Right cardiac atrium (tissue), 5 donors: ENCODE measurements at regions of chr10 and their contacts with region 1.

Region 1: GRCh38 chr10:76432274-76433012 is 1001.0 kb downstream of the LRMDA start:
- DNase-seq: peak in 2 of 3 donors; percentile 59
- ATAC-seq: peak; percentile 64 to 78
- H3K4me3 ChIP-seq: no peak overlapping the region
- H3K27ac ChIP-seq: peak overlapping the region; percentile 98
- H3K4me1 ChIP-seq: peaks cover 19% of the 10 kb centered on the region
- H3K27me3 ChIP-seq: no peaks in the 10 kb centered on the region

Region 2: DNA sequence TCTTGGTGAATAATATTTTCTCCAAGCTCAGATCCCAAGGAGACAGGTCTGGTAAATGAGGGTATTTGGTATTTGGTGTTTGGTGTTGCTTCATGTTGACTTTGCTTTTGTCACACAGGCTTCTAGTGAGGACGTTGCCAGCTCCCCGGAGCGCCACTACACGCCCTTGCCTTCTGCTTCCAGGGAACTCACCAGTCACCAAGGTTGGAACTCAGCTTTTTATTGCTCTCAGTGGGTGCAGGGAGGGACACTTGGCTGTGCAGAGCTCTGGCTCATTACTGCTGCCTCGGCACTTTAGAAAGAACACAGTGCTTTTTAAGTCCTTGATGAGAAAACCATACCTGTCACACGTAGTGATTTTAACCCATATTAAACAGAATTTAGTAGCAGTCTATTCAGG is 108.2 kb before region 1 on chr10:
- intact Hi-C with region 1: loop called in 1 of 4 experiments (anchors 10 kb)
- DNase-seq: peak; percentile 60 to 82 (median 76)
- ATAC-seq: peak; percentile 97
- H3K4me3 ChIP-seq: no peak overlapping the region
- H3K27ac ChIP-seq: peak overlapping the region; percentile 30
- H3K4me1 ChIP-seq: peaks cover 4% of the 10 kb centered on the region
- H3K27me3 ChIP-seq: no peaks in the 10 kb centered on the region

Region 3: DNA sequence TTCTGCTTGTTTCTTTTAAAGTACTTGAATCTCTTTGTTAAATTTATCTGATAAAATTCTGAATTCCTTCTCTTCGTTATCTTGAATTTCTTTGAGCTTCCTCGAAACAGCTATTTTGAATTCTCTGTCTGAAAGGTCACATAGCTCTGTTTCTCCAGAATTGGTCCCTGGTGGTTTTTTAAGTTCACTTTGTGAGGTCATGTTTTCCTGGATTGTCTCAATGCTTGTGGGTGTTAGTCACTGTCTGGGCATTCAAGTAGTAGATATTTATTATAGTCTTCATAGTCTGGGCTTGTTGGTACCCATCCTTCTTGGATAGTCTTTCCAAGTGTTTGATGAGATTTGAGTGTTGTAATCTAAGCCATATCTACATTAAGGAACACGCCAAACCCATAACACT is 59.6 kb after region 1 on chr10:
- intact Hi-C with region 1: no loop called
- DNase-seq: no peak
- ATAC-seq: peak in 1 of 2 donors; percentile 42
- H3K4me3 ChIP-seq: no peak overlapping the region
- H3K27ac ChIP-seq: no peak overlapping the region
- H3K4me1 ChIP-seq: no peaks in the 10 kb centered on the region
- H3K27me3 ChIP-seq: no peaks in the 10 kb centered on the region

Region 4: GRCh38 chr10:76547352-76547972 is 115.0 kb after region 1 on chr10:
- intact Hi-C with region 1: loop called in 1 of 4 experiments (anchors 10 kb)
- DNase-seq: peak; percentile 73 to 89 (median 82)
- ATAC-seq: peak; percentile 22 to 73
- H3K4me3 ChIP-seq: no peak overlapping the region
- H3K27ac ChIP-seq: no peak overlapping the region
- H3K4me1 ChIP-seq: no peaks in the 10 kb centered on the region
- H3K27me3 ChIP-seq: no peaks in the 10 kb centered on the region

Region 5: GRCh38 chr10:76675951-76676587 is 243.6 kb after region 1 on chr10:
- intact Hi-C with region 1: no loop called
- DNase-seq: peak; percentile 80 to 89 (median 82)
- ATAC-seq: peak; percentile 96 to 98
- H3K4me3 ChIP-seq: no peak overlapping the region
- H3K27ac ChIP-seq: peak overlapping the region; percentile 74
- H3K4me1 ChIP-seq: no peaks in the 10 kb centered on the region
- H3K27me3 ChIP-seq: no peaks in the 10 kb centered on the region